K562 (cell line): ENCODE measurements at regions of chr14 and their contacts with region 1.

Region 1: DNA sequence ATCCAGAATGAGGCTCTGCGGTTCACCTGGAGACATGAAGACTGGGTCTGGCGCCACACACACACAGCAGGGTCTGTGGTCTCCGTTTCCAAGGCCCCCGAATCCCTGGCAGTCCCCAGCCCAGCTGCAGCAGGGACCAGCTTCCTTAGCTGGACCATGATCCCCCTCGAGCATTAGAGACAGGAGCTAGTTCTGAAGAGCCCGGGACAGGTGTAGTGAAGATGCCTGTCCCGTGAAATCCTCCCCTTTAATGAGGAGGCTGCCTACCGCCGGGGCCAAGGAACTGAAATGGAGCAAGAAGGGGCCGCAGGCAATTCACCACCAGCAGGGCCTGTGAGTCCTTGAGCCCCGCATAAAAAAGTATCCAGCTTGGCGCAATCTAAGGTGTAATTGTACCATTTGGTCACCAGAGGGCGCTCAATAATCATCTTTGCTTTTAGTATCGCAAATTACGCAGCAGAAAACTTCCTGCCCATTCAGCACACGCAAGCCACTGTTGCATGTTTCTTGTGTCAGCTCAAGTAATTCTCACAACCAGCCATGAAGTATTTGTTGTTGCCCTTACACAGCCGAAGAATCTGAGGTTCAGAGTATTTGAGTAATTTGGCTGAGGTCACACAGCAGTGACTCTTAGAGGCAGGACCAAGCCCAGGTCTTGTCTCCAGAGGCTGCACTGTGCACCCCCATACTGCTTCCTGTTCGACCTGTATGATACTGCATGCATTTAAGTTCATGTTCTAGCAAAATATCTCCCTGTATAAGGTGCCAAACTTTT is 54.3 kb upstream of the PPP2R5C start:
- DNase-seq: peak in 3 of 4 experiments; percentile 31 to 87 (median 42)
- ATAC-seq: peak; percentile 36
- H3K4me3 ChIP-seq: no peak overlapping the region
- H3K27ac ChIP-seq: peak overlapping the region; percentile 99
- H3K4me1 ChIP-seq: peaks cover 41 to 56% of the 10 kb centered on the region in 2 experiments
- H3K27me3 ChIP-seq: no peaks in the 10 kb centered on the region
- CTCF ChIP-seq: peak; percentile 66 to 82 (median 79)
- EP300 ChIP-seq: peak; percentile 43; the same call in 1 of the 2 replicates
- POLR2A ChIP-seq: no peak
- RAD21 ChIP-seq: peak; percentile 81 to 86

Region 2: DNA sequence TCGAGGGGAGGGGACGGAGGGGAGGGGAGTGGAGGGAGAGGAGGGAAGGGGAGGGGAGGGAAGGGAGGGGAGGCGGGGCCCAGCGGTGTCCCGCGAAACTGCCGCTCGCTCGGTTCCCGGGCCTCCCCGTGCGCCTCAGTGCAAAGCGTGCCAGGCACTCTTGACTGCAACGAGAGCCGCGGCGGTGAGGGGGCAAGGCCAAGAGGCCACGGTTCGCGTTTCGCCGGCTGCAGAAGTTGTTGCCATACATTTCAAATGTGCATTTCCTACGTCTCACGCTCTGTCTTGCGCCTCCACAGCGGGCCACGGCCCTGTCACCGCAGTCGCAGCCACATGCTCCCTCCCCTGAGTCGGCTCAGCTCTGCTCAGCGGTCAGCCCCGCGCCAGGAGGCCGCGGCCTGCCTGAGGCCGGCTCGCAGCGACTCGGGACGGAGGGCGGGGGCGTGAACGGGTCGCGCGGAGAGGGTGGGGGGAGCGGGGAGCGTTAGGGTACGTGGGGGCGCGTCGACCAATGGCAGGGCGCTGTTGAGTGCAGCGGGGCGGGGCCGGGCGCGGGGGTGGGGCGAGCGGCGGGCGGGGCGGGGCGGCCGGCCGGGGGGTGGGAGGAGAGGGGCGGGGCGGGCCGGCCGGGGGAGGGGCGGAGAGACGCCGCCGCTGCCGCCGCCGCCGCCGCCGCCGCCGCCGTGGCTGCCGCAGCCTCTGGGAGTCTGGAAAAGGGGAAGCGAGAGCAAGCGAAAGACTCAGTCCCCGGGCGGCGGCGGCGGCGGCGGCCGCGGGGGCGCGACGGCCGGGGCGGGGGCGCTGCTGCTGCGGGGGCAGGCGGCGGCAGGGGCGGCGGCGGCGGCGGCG is 54.0 kb after region 1 on chr14 and contains the start of gene PPP2R5C:
- CTCF ChIA-PET with region 1: interaction called, 3 read pairs
- POLR2A ChIA-PET with region 1: interaction called, 12 read pairs
- in situ Hi-C with region 1: no loop called
- intact Hi-C with region 1: no loop called
- DNase-seq: peak; percentile 82 to 93 (median 87)
- ATAC-seq: peak; percentile 89
- H3K4me3 ChIP-seq: peak within 1 kb of the TSS; percentile 89
- H3K27ac ChIP-seq: peak within 1 kb of the TSS; percentile 99
- H3K4me1 ChIP-seq: peaks cover 15 to 31% of the 10 kb centered on the region in 2 experiments
- H3K27me3 ChIP-seq: no peaks in the 10 kb centered on the region
- CTCF ChIP-seq: 0 out of 6 replicates have a peak, but pooled peaks of 1 of the 3 experiments have one; percentile 3
- EP300 ChIP-seq: no peak
- POLR2A ChIP-seq: peak; percentile 96
- RAD21 ChIP-seq: no peak
- polyA plus RNA-seq, gene PPP2R5C: 517 to 617 TPM

Region 3: GRCh38 chr14:101889898-101890297 is 182.6 kb after region 1 on chr14:
- CTCF ChIA-PET with region 1: no interaction called
- POLR2A ChIA-PET with region 1: no interaction called
- in situ Hi-C with region 1: no loop called
- intact Hi-C with region 1: loop called (anchors 5 kb)
- DNase-seq: no peak
- ATAC-seq: no peak
- H3K4me3 ChIP-seq: no peak overlapping the region
- H3K27ac ChIP-seq: no peak overlapping the region; the same call in 2 of the 3 replicates
- H3K4me1 ChIP-seq: peaks cover 0 to 5% of the 10 kb centered on the region in 2 experiments; a peak in 2 of 5 replicates
- H3K27me3 ChIP-seq: no peaks in the 10 kb centered on the region
- CTCF ChIP-seq: no peak
- EP300 ChIP-seq: no peak
- POLR2A ChIP-seq: no peak
- RAD21 ChIP-seq: no peak

Region 4: DNA sequence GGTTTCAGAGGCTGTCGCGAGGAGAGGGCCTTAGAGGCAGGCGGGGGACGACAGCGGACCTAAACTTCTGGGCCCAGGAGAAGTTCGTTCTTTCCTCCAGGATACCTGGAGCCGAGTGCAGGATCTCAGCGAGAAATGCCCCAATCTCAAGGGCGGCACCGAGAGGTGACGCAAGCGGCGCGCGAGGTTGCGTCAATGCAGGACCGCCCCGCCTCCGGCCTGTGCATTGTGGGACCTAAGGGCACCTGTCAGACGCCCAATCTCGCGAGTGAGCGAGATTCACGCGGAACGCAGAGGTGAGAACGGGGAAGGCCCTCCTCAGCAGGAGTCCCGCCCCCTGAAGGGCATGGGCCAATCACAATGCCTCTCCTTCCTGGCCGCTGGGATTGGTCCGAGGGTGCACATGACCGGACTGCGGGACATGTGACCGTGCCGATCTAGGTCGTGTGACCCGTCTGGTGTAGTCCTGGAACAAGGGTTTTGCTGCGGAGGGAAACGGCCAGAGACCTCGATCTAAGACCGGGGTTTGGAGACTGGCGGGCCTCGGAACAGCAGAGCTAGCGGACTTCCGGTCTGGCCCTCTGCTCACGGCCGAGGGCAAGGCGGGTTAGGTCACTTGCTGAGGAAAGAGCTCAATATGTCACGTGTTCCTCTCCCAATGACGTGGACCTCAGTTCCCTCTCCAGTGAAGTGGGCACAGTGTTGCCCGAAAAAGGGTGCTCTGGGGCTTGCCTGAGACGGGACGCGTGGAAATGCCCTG is 240.8 kb after region 1 on chr14:
- CTCF ChIA-PET with region 1: no interaction called
- POLR2A ChIA-PET with region 1: interaction called, 6 read pairs
- in situ Hi-C with region 1: no loop called
- intact Hi-C with region 1: loop called (anchors 5 kb)
- DNase-seq: peak; percentile 94 to 99 (median 96)
- ATAC-seq: peak; percentile 99
- H3K4me3 ChIP-seq: peak overlapping the region; percentile 96
- H3K27ac ChIP-seq: peak overlapping the region; percentile 99
- H3K4me1 ChIP-seq: peaks cover 5 to 18% of the 10 kb centered on the region in 2 experiments; a peak in 4 of 5 replicates
- H3K27me3 ChIP-seq: no peaks in the 10 kb centered on the region
- CTCF ChIP-seq: peak in 1 of 3 experiments; percentile 37; a peak in 1 of 6 replicates
- EP300 ChIP-seq: 0 out of 2 replicates have a peak, but pooled peaks have one; percentile 8
- POLR2A ChIP-seq: peak; percentile 97
- RAD21 ChIP-seq: no peak

Region 5: GRCh38 chr14:101964297-101965144 is 257.3 kb after region 1 on chr14 and contains the start of gene DYNC1H1:
- CTCF ChIA-PET with region 1: interaction called, 4 read pairs
- POLR2A ChIA-PET with region 1: interaction called, 4 read pairs
- in situ Hi-C with region 1: no loop called
- intact Hi-C with region 1: loop called (anchors 1 kb)
- DNase-seq: peak; percentile 88 to 93 (median 88)
- ATAC-seq: peak; percentile 87
- H3K4me3 ChIP-seq: peak within 1 kb of the TSS; percentile 96
- H3K27ac ChIP-seq: peak within 1 kb of the TSS; percentile 76
- H3K4me1 ChIP-seq: peaks cover 34 to 39% of the 10 kb centered on the region in 2 experiments
- H3K27me3 ChIP-seq: no peaks in the 10 kb centered on the region
- CTCF ChIP-seq: no peak
- EP300 ChIP-seq: no peak
- POLR2A ChIP-seq: peak; percentile 89
- RAD21 ChIP-seq: no peak
- polyA plus RNA-seq, gene DYNC1H1: 31.9 to 35.9 TPM

Region 6: DNA sequence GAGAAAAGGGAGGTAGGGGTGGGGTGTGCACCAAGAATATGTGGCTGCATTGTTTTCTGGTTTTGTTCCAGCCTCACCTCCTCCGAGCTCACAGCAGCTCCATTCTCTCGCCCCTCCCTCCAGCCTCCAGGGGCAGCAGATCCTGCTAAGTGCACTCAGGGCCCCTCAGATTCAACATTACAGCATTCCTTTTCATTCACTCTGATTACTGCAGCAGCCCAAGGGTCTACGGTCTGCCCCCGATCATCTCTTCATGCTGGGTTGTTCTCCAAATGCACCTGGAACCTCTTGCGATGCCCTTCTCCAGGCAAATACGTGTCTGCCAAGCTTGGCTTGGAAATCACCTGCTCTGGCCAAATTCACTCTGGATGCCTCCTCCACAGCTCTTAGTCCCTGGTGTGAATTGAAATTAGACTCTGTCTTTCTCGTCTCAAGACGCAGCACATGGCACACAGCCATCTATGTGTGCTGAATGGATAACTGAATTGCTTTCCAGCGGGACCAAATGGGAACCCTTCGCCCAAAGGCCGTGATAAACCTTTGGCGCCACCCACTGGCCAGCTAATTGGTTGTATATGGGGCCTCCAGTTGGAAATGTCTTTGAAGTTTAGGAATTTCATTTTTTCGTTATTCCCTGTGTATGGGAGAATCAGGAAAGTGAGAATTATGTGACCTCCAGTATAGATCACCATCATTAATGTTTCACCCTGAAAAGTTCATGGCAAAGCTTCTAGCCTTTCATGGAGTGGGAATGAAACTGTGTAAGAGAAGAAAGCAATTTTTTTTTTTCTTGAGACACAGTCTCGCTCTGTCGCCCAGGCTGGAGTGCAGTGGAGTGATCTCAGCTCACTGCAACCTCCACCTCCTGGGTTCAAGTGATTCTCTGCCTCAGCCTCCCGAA is 389.2 kb after region 1 on chr14:
- CTCF ChIA-PET with region 1: no interaction called
- POLR2A ChIA-PET with region 1: no interaction called
- in situ Hi-C with region 1: no loop called
- intact Hi-C with region 1: loop called (anchors 5 kb)
- DNase-seq: peak; percentile 48 to 86 (median 60)
- ATAC-seq: peak; percentile 81
- H3K4me3 ChIP-seq: no peak overlapping the region
- H3K27ac ChIP-seq: peak overlapping the region; percentile 70; the same call in 2 of the 3 replicates
- H3K4me1 ChIP-seq: peaks cover 27 to 31% of the 10 kb centered on the region in 2 experiments
- H3K27me3 ChIP-seq: no peaks in the 10 kb centered on the region
- CTCF ChIP-seq: peak; percentile 79 to 90 (median 87)
- EP300 ChIP-seq: no peak
- POLR2A ChIP-seq: no peak
- RAD21 ChIP-seq: peak; percentile 75 to 84